ENCODE measurements at regions of chr10 and their contacts with region 1.

Region 1: DNA sequence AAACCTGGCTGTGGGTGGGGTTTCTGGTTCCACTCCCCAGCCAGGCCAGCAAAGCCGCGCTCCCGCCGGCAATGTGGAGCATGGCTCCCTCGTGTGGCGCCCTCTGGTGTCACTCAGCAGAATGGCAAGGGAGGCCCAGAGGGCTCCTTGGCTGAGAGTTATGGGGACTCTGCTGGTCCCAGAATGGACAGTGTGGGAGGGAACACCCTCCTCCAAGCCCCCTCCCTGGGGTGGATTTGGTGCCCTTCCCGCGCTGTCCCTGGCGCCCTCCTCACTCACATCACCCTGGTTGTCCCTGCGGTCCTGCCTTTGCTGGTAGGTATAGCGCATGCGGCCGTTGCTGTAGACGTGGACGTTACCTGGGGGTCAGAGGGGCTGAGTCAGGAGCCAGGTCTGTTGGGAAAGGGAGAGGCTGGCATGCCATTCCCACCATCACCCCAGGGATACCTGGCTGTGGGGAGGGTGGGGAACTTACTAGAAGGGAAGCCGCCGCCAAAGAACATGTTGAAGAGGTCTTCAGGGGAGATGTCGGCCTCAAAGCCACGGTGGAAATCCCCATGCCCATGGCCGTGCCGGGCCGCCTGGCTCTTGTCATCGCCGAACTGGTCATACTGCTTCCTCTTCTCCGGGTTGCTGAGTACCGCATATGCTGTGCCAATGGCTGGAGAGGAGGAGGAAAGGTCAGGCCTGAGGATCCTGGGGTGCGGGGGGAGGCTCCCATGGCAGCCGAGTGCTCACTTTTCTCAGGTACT is 14.0 kb downstream of the DNAJB12 start:
- DNase-seq: peak; percentile 62 to 83 (median 80)
- H3K4me3 ChIP-seq: no peak overlapping the region
- H3K27ac ChIP-seq: peak overlapping the region; percentile 0 to 64 (median 51)
- H3K4me1 ChIP-seq: peaks cover 15 to 35% of the 10 kb centered on the region in 2 donors
- H3K27me3 ChIP-seq: no peaks in the 10 kb centered on the region
- CTCF ChIP-seq: peak; percentile 78 to 95 (median 90)
- POLR2A ChIP-seq: no peak

Region 2: DNA sequence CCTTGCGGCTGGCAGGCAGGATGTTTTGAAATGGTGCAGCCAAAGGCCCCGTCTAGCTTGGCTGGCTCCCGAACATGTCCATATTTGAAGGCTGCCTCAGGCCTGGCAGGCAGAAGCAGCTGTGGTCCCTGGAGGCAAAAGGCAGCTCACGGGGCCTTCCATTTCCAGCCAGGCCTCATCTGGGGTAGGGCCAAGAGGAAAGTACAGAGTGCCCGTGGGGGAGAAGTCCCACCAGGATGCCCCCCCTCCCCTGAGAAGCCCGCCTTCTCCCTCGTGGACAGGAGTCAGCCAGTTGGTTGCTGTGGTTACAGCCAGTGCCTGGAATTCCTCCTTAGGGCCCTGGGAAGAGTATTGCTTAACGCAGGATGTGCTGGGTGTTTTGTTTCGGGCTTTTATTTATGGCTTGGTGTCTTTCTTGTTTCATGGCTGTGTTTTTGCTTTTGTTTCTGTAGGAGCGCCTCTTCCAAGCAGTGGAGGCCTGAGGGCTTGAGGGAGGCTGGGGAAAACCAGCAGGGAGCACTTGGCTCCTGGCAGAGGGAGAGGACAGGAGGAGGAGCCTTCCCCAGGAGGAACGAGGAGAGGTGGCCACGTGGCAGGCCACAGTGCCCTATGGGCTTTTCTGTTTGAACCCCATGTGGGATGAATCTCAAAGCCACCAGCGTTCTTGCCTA is 331.1 kb before region 1 on chr10:
- intact Hi-C with region 1: no loop called
- DNase-seq: peak; percentile 67 to 96 (median 88)
- H3K4me3 ChIP-seq: no peak overlapping the region
- H3K27ac ChIP-seq: peak overlapping the region; percentile 34 to 91 (median 75)
- H3K4me1 ChIP-seq: peaks cover 55 to 81% of the 10 kb centered on the region in 2 donors
- H3K27me3 ChIP-seq: no peaks in the 10 kb centered on the region
- CTCF ChIP-seq: no peak
- POLR2A ChIP-seq: no peak

Region 3: DNA sequence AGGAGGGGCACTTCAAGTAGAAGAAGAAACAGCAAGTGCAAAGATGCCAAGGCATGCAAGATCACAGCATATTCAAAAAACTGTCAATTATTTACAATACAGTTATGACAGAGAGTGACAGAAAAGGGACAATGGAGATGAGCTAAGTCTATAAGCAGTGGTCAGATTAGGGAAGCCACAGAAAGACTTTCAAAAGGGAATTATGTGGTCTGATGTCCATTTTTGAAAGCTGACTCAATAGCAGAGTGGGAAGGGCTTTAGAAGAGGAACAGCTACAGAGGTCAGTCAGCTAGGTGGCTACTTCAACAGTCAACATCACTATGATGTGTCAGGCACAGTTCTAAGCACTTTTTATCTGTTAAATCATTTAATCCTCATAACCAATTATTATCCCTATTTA is 207.2 kb before region 1 on chr10:
- intact Hi-C with region 1: loop called (anchors 10 kb)
- DNase-seq: no peak
- H3K4me3 ChIP-seq: no peak overlapping the region
- H3K27ac ChIP-seq: peak overlapping the region in 1 of 5 donors; percentile 12
- H3K4me1 ChIP-seq: peaks cover 0 to 12% of the 10 kb centered on the region in 2 donors
- H3K27me3 ChIP-seq: no peaks in the 10 kb centered on the region
- CTCF ChIP-seq: no peak
- POLR2A ChIP-seq: no peak

Region 4: DNA sequence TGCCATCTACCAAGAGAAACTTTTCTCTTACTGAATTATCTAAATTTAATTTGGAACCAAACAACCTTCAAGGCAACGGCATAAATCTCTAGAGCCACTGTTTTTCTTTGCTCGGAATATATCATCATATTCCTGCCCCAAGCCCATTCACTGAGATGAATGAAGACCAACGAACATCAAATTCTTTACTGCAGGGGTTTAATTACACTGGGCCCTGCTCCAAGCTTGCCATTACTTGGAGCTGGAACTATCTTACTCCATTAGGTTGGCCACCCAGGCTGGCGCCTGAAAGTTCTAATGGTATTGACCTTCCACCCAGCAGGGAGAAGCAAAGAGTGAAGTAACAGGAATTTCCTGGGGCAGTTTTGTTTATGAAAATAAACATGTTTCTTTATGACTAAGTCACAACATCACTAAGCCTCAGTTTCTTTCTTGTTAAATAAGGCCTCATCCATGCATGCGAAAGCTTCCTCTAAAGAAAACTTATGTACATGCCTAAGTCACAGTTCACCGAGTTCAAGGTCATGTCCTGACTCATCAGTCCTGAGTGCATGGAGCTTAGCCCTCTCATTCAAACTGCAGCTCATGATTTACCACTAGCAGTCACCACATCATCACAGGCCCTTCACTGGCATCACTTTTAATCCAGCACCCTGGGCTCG is 166.9 kb before region 1 on chr10:
- intact Hi-C with region 1: no loop called
- DNase-seq: peak; percentile 29 to 67 (median 41)
- H3K4me3 ChIP-seq: no peak overlapping the region
- H3K27ac ChIP-seq: peak overlapping the region in 3 of 5 donors; percentile 26 to 69 (median 58)
- H3K4me1 ChIP-seq: peaks cover 33 to 44% of the 10 kb centered on the region in 2 donors
- H3K27me3 ChIP-seq: no peaks in the 10 kb centered on the region
- CTCF ChIP-seq: no peak
- POLR2A ChIP-seq: no peak